Naive thymus-derived CD8-positive, alpha-beta T cell (primary cell): ENCODE measurements at regions of chr1 and their contacts with region 1.

Region 1: GRCh38 chr1:32107742-32108661 is at the start of gene KPNA6:
- DNase-seq: peak; percentile 76 to 97 (median 92)
- ATAC-seq: peak; percentile 82 to 87
- H3K4me3 Mint-ChIP-seq: peak within 1 kb of the TSS; percentile 96 to 100 (median 100)
- H3K27ac Mint-ChIP-seq: peak within 1 kb of the TSS; percentile 95 to 99 (median 99)
- H3K4me1 Mint-ChIP-seq: peaks cover 14 to 53% (median 44%) of the 10 kb centered on the region in 4 donors
- H3K27me3 Mint-ChIP-seq: no peaks in the 10 kb centered on the region
- polyA plus RNA-seq, gene KPNA6: 26.5 to 31.9 (median 28.3) TPM

Region 2: DNA sequence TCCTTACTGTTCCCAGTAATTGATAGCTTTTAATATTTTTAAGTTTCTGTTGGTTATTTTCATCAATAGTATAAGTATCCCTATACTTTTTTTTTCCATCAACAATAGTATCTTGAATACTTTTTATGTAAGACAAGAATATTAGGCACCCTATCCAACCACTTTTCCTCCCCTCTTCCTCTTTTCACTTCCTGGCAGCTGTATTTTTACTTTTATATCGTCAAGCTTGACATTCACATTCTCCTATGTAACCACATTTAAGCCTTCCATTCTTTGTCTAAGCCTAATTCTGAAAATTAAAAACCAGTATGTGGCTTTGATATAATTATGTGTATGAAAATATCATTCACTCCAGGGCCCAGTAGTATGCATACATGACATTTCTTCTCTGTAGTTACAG is 26.0 kb before region 1 on chr1:
- POLR2A ChIA-PET with region 1: interaction called, 12 read pairs
- DNase-seq: no peak
- ATAC-seq: no peak
- H3K4me3 Mint-ChIP-seq: no peak overlapping the region
- H3K27ac Mint-ChIP-seq: peak overlapping the region in 3 of 10 donors; percentile 2 to 11 (median 3)
- H3K4me1 Mint-ChIP-seq: peaks cover 4 to 20% (median 11%) of the 10 kb centered on the region in 4 donors
- H3K27me3 Mint-ChIP-seq: no peaks in the 10 kb centered on the region

Region 3: GRCh38 chr1:32122151-32122550 is 14.1 kb after region 1 on chr1:
- POLR2A ChIA-PET with region 1: interaction called, 27 read pairs
- DNase-seq: peak in 2 of 10 donors; percentile 33 to 45
- ATAC-seq: peak in 1 of 2 donors; percentile 30
- H3K4me3 Mint-ChIP-seq: peak overlapping the region; percentile 9 to 84 (median 67)
- H3K27ac Mint-ChIP-seq: peak overlapping the region; percentile 29 to 92 (median 82)
- H3K4me1 Mint-ChIP-seq: peaks cover 20 to 74% (median 59%) of the 10 kb centered on the region in 4 donors
- H3K27me3 Mint-ChIP-seq: no peaks in the 10 kb centered on the region